ENCODE measurements at regions of chrX and their contacts with region 1.

Region 1: DNA sequence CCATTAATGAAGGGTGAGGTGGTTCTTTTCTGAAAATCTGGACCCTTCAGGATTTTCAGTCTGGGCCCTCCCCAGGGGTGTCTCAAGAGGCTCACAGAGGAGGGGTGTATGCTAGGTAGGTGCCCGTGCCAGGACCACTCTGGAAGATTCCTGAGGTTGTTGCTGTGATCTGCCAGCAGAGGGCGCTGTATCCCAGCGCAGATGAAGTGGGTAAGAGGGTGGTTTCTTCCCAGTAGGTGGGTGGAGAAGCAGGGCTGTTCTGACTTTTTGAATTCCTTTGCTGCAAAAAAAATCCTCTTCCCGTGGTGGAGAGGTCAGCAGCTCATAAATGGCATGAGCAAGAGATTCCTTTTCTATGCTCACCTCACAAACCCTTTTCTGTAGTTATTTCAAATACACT is 51.1 kb downstream of the SCML1 start:
- DNase-seq: peak; percentile 43
- H3K4me3 Mint-ChIP-seq: peak overlapping the region; percentile 11
- H3K27ac Mint-ChIP-seq: no peak overlapping the region
- H3K4me1 Mint-ChIP-seq: no peaks in the 10 kb centered on the region
- H3K27me3 Mint-ChIP-seq: no peaks in the 10 kb centered on the region
- CTCF ChIP-seq: peak; percentile 82

Region 2: GRCh38 chrX:17500145-17500579 is 288.3 kb before region 1 on chrX:
- CTCF ChIA-PET with region 1: no interaction called
- POLR2A ChIA-PET with region 1: no interaction called
- intact Hi-C with region 1: no loop called
- DNase-seq: no peak
- H3K4me3 Mint-ChIP-seq: no peak overlapping the region
- H3K27ac Mint-ChIP-seq: no peak overlapping the region
- H3K4me1 Mint-ChIP-seq: no peaks in the 10 kb centered on the region
- H3K27me3 Mint-ChIP-seq: peaks cover 38% of the 10 kb centered on the region
- CTCF ChIP-seq: no peak

Region 3: GRCh38 chrX:17750436-17750835 is 38.0 kb before region 1 on chrX:
- CTCF ChIA-PET with region 1: interaction called, 14 read pairs
- POLR2A ChIA-PET with region 1: no interaction called
- intact Hi-C with region 1: no loop called
- DNase-seq: no peak
- H3K4me3 Mint-ChIP-seq: no peak overlapping the region
- H3K27ac Mint-ChIP-seq: no peak overlapping the region
- H3K4me1 Mint-ChIP-seq: no peaks in the 10 kb centered on the region
- H3K27me3 Mint-ChIP-seq: peaks cover 62% of the 10 kb centered on the region
- CTCF ChIP-seq: no peak

Region 4: DNA sequence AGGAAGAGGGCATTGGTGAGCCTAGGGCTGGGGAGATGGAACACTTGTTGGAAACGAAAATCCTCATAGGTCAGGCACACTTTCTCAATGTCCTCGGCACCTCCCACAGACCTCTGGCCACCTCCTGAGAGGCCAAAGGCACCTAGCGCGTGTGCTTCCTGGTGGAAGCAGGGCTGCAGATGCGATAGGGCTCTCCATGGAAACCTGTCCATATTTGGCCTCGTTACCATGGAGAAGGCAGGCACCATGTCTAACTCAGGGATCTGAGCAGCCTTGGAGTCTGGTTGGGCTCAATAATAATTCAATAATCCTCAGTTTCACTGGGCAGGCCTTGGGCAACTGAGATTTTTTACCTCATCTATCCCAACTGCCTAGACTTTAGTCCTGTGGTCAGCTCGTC is 14.3 kb after region 1 on chrX:
- CTCF ChIA-PET with region 1: interaction called, 19 read pairs
- POLR2A ChIA-PET with region 1: no interaction called
- intact Hi-C with region 1: no loop called
- DNase-seq: no peak
- H3K4me3 Mint-ChIP-seq: no peak overlapping the region
- H3K27ac Mint-ChIP-seq: no peak overlapping the region
- H3K4me1 Mint-ChIP-seq: no peaks in the 10 kb centered on the region
- H3K27me3 Mint-ChIP-seq: no peaks in the 10 kb centered on the region
- CTCF ChIP-seq: no peak

Region 5: GRCh38 chrX:17842769-17843525 is 54.5 kb after region 1 on chrX:
- CTCF ChIA-PET with region 1: interaction called, 13 read pairs
- POLR2A ChIA-PET with region 1: no interaction called
- intact Hi-C with region 1: no loop called
- DNase-seq: peak; percentile 39
- H3K4me3 Mint-ChIP-seq: no peak overlapping the region
- H3K27ac Mint-ChIP-seq: no peak overlapping the region
- H3K4me1 Mint-ChIP-seq: no peaks in the 10 kb centered on the region
- H3K27me3 Mint-ChIP-seq: peaks cover 30% of the 10 kb centered on the region
- CTCF ChIP-seq: no peak

Region 6: GRCh38 chrX:18210470-18210869 is 422.0 kb after region 1 on chrX:
- CTCF ChIA-PET with region 1: interaction called, 14 read pairs
- POLR2A ChIA-PET with region 1: no interaction called
- intact Hi-C with region 1: loop called (anchors 1 kb)
- DNase-seq: no peak
- H3K4me3 Mint-ChIP-seq: no peak overlapping the region
- H3K27ac Mint-ChIP-seq: no peak overlapping the region
- H3K4me1 Mint-ChIP-seq: no peaks in the 10 kb centered on the region
- H3K27me3 Mint-ChIP-seq: no peaks in the 10 kb centered on the region
- CTCF ChIP-seq: no peak

Region 7: DNA sequence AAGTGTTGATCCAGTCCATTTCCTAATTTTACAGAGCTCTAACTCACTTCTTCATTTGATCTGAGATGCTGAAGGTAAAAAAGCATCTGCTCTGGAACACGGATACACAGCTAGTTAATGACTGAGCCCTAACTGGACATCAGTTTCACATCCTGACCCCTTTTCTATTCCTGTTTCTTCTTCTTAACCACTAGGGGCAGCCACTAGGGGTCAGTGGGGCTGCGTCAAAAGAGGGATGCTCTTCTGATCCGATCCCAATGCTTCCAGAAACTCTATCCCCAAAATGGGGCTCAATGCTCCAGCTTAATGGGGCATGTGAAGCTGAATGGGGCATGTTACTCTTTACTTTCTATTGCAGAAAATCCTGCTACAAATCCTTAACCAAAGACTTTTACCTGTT is 1228.8 kb after region 1 on chrX:
- CTCF ChIA-PET with region 1: no interaction called
- POLR2A ChIA-PET with region 1: no interaction called
- intact Hi-C with region 1: no loop called
- DNase-seq: peak; percentile 49
- H3K4me3 Mint-ChIP-seq: no peak overlapping the region
- H3K27ac Mint-ChIP-seq: no peak overlapping the region
- H3K4me1 Mint-ChIP-seq: no peaks in the 10 kb centered on the region
- H3K27me3 Mint-ChIP-seq: no peaks in the 10 kb centered on the region
- CTCF ChIP-seq: peak; percentile 4

Measured in MCF 10A (cell line).